Right cardiac atrium (tissue), 5 donors: ENCODE measurements at regions of chr10 and their contacts with region 1.

Region 1: DNA sequence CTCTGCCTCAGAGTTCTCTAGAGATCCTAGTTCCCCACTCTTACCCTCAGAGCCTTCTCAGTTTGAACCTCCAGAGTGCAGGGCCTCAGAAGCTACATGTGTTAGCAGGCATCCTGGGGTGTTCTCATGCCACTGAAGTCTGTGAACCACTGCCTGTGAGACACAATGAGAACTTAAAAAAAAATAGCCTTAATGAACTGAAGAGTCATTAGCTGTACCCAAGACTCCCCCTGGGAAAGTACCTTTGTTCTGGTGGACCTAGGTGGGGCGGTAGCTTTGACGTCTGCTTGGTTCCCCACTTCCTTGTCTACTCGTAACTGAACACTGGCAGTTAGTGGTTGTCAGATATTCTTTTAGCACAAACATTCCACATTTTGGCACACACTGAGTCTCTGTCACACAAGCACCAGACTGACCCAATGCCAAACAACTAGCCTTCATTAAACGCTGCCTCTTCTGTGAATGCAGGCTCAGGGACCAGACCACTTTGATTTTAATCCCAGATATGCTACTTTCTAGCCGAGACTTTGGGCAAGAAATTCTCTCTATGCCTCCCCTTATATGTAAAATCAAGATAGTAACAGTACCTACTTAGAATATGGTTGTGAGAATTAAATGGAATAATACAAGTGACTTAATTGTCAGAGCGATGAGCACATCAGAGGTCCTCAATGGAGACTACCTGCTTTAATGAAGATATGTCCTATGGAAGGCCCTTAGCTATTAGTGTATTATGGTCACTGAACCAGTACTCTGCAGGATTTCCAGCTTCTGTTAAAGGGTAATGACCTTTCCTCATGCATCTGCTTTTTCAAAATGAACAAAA is 75.3 kb upstream of the CC2D2B start:
- DNase-seq: no peak
- ATAC-seq: peak; percentile 51 to 58
- H3K4me3 ChIP-seq: no peak overlapping the region
- H3K27ac ChIP-seq: no peak overlapping the region
- H3K4me1 ChIP-seq: no peaks in the 10 kb centered on the region
- H3K27me3 ChIP-seq: no peaks in the 10 kb centered on the region

Region 2: GRCh38 chr10:95755511-95756004 is 76.9 kb before region 1 on chr10:
- intact Hi-C with region 1: loop called in 1 of 4 experiments (anchors 10 kb)
- DNase-seq: peak in 2 of 3 donors; percentile 44
- ATAC-seq: peak; percentile 66 to 80
- H3K4me3 ChIP-seq: peak overlapping the region; percentile 68
- H3K27ac ChIP-seq: peak overlapping the region; percentile 66
- H3K4me1 ChIP-seq: no peaks in the 10 kb centered on the region
- H3K27me3 ChIP-seq: no peaks in the 10 kb centered on the region